ENCODE measurements at regions of chr17 and their contacts with region 1.

Region 1: DNA sequence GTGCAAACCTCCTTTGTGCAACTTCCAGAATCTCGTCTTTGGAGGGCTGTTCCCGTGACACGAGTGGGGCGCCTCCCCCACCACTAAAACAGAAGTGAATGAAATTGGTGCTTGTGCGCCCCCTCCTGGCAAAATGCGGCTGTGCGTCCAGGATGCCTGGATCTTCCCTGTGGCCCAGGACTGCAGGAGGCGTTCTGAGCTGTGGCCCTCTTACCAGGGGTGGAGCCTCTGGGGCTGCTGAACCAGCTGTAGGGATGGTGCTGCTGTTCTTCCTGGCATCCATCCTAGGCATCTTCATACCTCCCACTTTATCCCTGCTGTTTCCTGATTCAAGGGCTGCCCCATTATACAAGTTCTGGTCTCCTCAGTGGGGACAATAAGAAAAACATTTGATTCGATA is 18.5 kb upstream of the NAGLU start:
- DNase-seq: peak; percentile 91
- H3K4me3 Mint-ChIP-seq: no peak overlapping the region
- H3K27ac Mint-ChIP-seq: peak overlapping the region; percentile 95
- H3K4me1 Mint-ChIP-seq: peaks cover 51% of the 10 kb centered on the region
- H3K27me3 Mint-ChIP-seq: no peaks in the 10 kb centered on the region
- CTCF ChIP-seq: peak; percentile 99

Region 2: DNA sequence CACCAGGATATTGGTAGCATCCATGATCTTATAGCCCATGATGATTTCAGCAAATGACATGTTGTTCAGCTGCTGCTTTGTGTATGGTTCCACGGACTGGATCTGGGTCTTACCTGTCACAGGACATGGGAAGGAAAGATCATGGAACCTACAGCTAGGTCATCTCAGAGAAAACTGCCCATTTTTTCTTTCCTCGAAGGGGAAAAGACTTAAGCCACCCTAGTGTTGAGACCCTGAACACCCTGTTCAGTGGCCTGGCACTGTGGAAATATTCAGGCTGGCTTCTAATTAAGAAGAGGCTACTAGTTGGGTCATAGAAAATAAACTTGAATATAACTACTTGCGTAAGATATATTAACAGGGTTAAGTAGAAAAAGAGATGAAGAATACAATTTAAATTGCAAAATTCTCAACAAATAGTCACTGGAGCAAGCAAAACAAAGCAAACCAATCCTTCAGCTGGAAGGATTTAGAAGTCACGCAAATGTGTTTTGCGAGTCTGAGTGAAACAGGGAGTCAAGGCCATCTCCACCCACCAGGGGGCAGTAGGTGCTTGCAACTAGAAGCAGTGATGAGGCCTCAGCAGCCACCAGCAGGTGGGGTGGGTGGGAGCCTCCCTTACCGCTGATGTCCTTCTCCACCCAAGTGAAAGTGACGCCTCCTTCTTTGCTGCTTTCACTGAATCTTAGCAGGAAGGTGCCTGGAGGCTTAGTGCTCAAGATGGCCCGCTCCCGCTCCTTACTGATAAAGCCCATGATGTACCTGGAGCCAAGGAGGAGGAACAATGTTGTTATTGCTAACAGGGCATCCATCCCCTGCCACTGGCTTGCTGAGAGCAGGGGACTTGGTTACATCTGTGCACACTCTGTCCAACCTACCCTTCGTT is 194.9 kb before region 1 on chr17:
- CTCF ChIA-PET with region 1: interaction called, 3 read pairs
- intact Hi-C with region 1: loop called (anchors 2 kb)
- DNase-seq: peak; percentile 98
- H3K4me3 Mint-ChIP-seq: no peak overlapping the region
- H3K27ac Mint-ChIP-seq: no peak overlapping the region
- H3K4me1 Mint-ChIP-seq: peaks cover 12% of the 10 kb centered on the region
- H3K27me3 Mint-ChIP-seq: no peaks in the 10 kb centered on the region
- CTCF ChIP-seq: peak; percentile 100

Region 3: DNA sequence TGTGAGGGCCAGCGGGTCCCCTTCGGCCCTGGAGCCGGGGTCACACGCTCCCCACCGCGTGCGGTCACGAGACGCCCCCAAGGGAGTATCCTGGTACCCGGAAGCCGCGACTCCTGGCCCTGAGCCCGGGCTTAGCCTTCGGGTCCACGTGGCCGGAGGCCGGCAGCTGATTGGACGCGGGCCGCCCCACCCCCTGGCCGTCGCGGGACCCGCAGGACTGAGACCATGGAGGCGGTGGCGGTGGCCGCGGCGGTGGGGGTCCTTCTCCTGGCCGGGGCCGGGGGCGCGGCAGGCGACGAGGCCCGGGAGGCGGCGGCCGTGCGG is 18.5 kb after region 1 on chr17 and contains the start of gene NAGLU:
- CTCF ChIA-PET with region 1: interaction called, 19 read pairs
- intact Hi-C with region 1: no loop called
- DNase-seq: peak; percentile 99
- H3K4me3 Mint-ChIP-seq: peak within 1 kb of the TSS; percentile 94
- H3K27ac Mint-ChIP-seq: peak within 1 kb of the TSS; percentile 69
- H3K4me1 Mint-ChIP-seq: peaks cover 53% of the 10 kb centered on the region
- H3K27me3 Mint-ChIP-seq: no peaks in the 10 kb centered on the region
- CTCF ChIP-seq: no peak
- total RNA-seq, gene NAGLU: 53.8 and 59.1 TPM in 2 replicates